ENCODE measurements at regions of chr17 and their contacts with region 1.

Region 1: DNA sequence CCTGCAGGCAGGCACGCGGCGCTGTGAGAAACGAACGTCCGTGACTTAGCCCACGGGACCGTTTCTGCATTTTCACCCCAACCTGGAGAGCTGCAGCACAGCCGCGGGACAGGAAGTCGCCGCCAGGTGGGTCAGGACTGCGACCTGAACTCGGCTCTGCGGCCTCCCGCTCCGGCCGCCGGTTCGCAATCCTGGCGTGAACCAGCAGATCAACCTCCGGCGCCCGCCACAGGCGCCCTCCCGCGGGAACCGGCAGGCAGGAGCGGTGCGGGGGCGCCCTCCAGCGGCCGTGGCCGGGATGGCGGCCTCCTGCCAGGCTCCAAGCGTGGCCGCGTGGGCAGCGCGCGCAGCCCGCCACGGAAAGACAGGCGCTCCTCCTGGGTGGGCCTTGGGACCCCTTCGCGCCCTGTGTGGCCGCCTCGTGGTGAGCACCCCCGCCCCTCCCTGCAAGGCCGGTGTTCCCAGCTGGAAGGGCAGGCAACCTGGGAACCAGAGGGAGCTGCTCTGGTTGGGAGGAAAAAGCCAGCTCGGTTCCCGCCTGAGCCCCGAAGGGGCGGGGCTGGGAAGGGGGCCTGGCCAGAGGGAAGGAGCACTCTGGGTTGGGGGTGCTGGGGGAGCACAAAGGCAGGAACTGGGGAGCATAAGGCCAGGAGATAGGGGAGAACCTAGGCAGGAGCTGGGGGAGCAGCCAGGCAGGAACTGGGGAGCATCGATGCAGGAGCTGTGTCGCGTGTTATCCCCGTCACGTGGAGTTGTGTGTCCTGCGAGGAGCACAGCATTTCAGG is 28.2 kb downstream of the ACTG1 start:
- DNase-seq: peak; percentile 75 to 96
- H3K4me3 ChIP-seq: no peak overlapping the region
- CTCF ChIP-seq: peak in 2 of 3 donors; percentile 70 to 86
- POLR2A ChIP-seq: no peak

Region 2: DNA sequence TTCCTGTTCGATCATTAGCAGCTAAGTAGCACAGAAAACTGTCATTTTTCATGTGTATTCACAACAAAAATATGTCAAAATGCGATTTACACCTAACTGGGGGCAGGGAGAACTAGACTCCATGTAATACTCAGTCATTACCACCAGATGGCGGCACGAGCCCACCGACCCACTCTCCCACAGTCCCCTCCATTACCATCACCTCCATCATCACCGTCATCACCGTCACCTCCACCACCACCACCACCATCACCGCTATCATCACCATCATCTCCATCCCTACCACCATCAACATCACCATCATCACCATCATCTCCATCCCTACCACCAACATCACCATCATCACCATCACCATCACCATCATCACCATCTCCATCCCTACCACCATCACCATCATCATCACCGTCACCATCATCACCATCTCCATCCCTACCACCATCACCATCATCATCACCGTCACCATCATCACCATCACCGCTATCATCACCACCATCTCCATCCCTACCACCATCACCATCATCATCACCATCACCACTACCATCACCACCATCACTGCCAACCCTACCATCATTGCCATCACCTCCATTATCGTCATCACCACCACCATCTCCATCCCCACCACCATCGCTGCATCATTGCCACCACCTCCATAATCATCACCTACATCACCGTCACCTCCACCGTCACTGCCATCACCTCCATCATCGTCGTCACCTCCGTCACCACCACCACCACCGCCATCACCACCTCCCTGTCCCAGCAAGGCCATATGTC is 230.8 kb before region 1 on chr17:
- intact Hi-C with region 1: loop called (anchors 2 kb)
- DNase-seq: no peak
- H3K4me3 ChIP-seq: no peak overlapping the region
- CTCF ChIP-seq: peak in 1 of 3 donors; percentile 95
- POLR2A ChIP-seq: no peak

Region 3: DNA sequence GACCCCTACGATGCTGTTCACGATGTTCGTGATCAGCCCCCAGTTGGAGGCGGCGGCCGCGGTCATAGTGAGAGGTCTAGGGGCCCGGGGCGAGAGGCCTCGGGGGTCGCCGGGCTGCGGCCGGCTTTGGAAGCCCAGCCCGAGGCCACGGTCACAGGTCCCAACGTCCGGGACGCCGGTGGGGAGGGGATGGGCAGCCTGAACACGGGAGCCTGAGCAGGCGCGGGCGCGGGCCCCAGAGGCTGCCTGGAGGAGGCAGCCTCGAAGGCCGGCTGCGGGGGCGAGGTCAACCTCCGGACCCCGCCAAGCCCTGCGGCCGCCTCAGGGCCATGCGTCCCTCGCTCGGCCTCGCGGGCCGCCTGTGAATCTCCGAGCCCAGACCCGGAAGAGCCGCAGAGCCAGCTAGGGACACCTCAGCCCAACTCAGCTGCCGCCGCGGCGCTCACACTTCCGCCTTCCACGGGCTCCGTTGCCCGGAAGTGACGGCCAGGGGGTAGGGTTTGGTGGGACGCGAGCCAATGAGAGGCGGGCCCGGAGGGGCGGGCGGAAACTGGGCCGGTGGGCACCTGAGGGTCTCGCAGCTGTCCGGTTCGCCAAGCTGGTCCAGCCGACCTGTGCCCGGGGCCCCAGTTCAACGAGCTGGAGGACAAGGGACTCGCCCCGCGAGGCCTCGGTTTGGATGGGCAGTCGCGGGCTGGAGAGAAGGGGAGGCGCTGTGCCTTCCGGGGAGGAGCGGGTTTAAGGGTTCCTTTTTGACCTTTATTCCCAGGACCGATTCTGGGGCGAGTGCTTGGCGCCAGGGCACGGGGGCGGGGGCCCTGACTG is 189.3 kb before region 1 on chr17 and contains the start of gene SLC38A10:
- intact Hi-C with region 1: loop called (anchors 10 kb)
- DNase-seq: peak; percentile 84 to 98
- H3K4me3 ChIP-seq: peak within 1 kb of the TSS; percentile 59
- CTCF ChIP-seq: no peak
- POLR2A ChIP-seq: peak in 1 of 2 donors; percentile 91
- total RNA-seq, gene SLC38A10: 47.5 to 100 (median 73.3) TPM

Region 4: GRCh38 chr17:81911277-81911961 is 427.0 kb after region 1 on chr17 and contains the start of gene PCYT2:
- intact Hi-C with region 1: no loop called
- DNase-seq: peak; percentile 85 to 98
- H3K4me3 ChIP-seq: peak within 1 kb of the TSS; percentile 60
- CTCF ChIP-seq: no peak
- POLR2A ChIP-seq: no peak
- total RNA-seq, gene PCYT2: 16.2 to 37.0 (median 25.3) TPM